IMR-90 (cell line): ENCODE measurements at regions of chr2 and their contacts with region 1.

Region 1: DNA sequence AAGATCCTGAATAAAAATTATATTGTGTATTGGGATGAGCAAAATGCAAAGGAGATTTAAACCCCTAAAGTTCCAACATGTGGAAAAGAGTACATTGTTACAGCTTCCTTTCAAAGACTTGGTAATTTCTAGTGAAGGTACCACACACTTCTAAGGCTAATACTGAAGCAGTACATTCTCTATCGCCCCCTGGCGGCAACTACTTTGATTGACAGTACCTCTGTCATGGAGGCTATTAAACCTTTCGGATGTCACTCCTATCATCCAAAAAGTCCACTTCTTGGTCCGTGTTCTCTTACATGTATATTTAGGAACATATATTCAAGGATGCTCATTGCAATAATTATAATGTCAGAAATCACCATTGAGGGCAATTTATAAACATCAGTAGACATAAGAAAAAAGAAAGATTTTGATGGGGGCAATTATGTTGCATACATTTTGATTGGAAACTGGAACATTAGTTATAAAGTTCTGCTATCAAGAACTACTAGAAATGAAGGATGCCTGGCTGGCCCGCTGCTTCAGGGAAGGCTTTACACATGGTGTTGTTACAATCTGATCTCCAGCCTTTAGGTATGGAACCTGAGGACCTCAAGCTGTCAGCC is 601.6 kb downstream of the CPS1 start:
- DNase-seq: peak; percentile 36
- ATAC-seq: no peak
- H3K4me3 ChIP-seq: no peak overlapping the region
- H3K27ac ChIP-seq: no peak overlapping the region
- H3K4me1 ChIP-seq: no peaks in the 10 kb centered on the region
- H3K27me3 ChIP-seq: no peaks in the 10 kb centered on the region
- CTCF ChIP-seq: peak; percentile 58
- POLR2A ChIP-seq: no peak
- RAD21 ChIP-seq: peak; percentile 41; the same call in 1 of the 2 replicates

Region 2: GRCh38 chr2:210445116-210445707 is 712.7 kb before region 1 on chr2:
- CTCF ChIA-PET with region 1: no interaction called
- POLR2A ChIA-PET with region 1: no interaction called
- dilution Hi-C with region 1: no loop called
- in situ Hi-C with region 1: no loop called
- intact Hi-C with region 1: loop called (anchors 5 kb)
- DNase-seq: peak; percentile 27
- ATAC-seq: peak; percentile 61; the same call in 1 of the 2 replicates
- H3K4me3 ChIP-seq: no peak overlapping the region
- H3K27ac ChIP-seq: no peak overlapping the region
- H3K4me1 ChIP-seq: no peaks in the 10 kb centered on the region
- H3K27me3 ChIP-seq: no peaks in the 10 kb centered on the region
- CTCF ChIP-seq: peak; percentile 64
- POLR2A ChIP-seq: no peak
- RAD21 ChIP-seq: peak; percentile 52

Region 3: DNA sequence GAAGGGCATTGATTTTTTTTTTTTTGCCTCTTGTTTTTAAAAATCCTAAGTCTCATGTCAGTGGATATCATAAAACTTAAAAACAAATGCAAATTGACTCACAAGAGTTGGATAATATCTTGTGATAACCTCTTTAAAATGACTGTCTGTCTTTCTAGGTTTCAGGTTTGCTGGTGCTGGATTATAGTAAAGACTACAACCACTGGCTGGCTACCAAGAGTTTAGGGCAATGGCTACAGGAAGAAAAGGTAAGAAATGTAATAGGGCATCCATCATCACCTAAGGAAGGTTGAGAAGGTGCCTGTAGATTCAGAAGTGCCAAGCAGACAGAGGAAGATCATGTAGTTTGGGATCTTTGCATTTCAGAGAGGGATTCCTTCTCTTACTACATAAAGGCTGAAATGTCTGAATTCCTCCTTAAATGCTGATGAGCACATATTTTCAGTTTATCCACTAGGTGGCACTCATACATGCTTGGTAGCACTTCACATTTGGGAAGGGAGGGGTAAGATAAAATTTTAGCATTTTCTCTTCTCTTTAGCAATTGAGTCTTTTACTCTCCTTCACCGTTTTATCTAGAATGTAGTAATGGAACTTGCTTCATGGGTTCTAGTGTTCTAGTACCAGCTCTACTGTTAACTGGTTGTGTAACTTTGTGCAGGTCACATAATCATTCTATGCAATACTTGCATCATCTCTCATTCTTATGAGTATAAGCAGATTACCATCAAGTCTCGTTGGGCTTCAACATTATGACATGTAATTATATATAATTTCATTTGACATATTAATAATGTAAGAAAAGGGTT is 580.5 kb before region 1 on chr2:
- CTCF ChIA-PET with region 1: interaction called, 4 read pairs
- POLR2A ChIA-PET with region 1: no interaction called
- dilution Hi-C with region 1: no loop called
- in situ Hi-C with region 1: no loop called
- intact Hi-C with region 1: loop called (anchors 1 kb)
- DNase-seq: peak; percentile 59
- ATAC-seq: peak; percentile 77
- H3K4me3 ChIP-seq: no peak overlapping the region
- H3K27ac ChIP-seq: no peak overlapping the region
- H3K4me1 ChIP-seq: no peaks in the 10 kb centered on the region
- H3K27me3 ChIP-seq: no peaks in the 10 kb centered on the region
- CTCF ChIP-seq: peak; percentile 72
- POLR2A ChIP-seq: no peak
- RAD21 ChIP-seq: peak; percentile 53

Region 4: GRCh38 chr2:210617732-210618330 is 540.1 kb before region 1 on chr2:
- CTCF ChIA-PET with region 1: no interaction called
- POLR2A ChIA-PET with region 1: no interaction called
- dilution Hi-C with region 1: no loop called
- in situ Hi-C with region 1: loop called (anchors 25 kb)
- intact Hi-C with region 1: loop called (anchors 5 kb)
- DNase-seq: peak; percentile 49
- ATAC-seq: peak; percentile 63; the same call in 1 of the 2 replicates
- H3K4me3 ChIP-seq: no peak overlapping the region
- H3K27ac ChIP-seq: no peak overlapping the region
- H3K4me1 ChIP-seq: no peaks in the 10 kb centered on the region
- H3K27me3 ChIP-seq: no peaks in the 10 kb centered on the region
- CTCF ChIP-seq: peak; percentile 66
- POLR2A ChIP-seq: no peak
- RAD21 ChIP-seq: peak; percentile 73

Region 5: DNA sequence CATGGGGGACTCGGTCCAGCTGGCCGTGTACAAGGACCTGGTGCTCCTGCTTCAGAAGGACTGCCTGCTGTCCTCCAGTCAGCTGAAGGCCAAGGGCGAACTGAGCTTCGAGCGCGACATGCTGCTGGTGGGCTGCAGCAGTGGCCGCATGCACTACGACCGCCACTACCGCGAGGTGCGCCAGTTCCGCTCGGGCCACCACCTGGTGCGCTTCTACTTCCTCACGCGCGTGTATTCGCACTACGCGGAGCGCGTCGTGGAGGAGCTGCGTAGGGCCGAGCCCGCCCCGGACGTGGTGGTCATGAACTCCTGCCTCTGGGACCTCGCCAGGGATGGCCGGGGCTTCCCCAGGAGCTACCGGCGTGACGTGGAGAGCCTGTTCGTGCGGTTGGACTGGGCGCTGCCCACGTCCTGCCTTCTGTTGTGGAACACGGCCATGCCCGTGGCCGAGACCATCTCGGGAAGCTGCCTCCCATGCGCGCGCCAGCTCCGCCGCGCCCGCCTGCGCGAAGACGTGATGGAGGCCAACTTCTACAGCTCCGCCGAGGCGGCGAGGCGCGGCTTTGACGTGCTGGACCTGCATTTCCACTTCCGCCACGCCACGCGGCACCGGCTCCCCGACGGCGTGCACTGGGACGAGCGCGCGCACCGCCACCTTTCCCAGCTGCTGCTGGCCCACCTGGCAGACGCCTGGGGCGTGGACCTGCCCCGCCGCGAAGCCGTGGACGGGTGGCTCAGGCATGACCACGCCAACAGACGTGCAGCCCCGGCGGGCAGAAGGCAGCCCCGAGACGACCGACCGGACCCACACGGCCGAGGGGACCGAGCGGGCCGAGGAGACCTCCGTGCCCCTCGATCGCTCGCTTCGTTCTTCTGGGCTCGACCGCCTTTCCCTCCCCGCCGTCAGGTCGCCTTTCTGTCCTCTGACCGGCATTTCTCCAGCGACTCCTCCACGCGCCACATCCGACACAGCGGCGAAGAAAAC is 1674.5 kb after region 1 on chr2:
- CTCF ChIA-PET with region 1: no interaction called
- POLR2A ChIA-PET with region 1: no interaction called
- dilution Hi-C with region 1: no loop called
- in situ Hi-C with region 1: no loop called
- intact Hi-C with region 1: no loop called
- DNase-seq: no peak
- ATAC-seq: no peak
- H3K4me3 ChIP-seq: no peak overlapping the region
- H3K27ac ChIP-seq: no peak overlapping the region
- H3K4me1 ChIP-seq: no peaks in the 10 kb centered on the region
- H3K27me3 ChIP-seq: no peaks in the 10 kb centered on the region
- CTCF ChIP-seq: no peak
- POLR2A ChIP-seq: no peak
- RAD21 ChIP-seq: no peak